Activated CD4-positive, alpha-beta T cell treated with anti-CD3 and anti-CD28 coated beads for 36 hours (primary cell): ENCODE measurements at regions of chr9 and their contacts with region 1.

Region 1: GRCh38 chr9:13056720-13057119 is 222.8 kb downstream of the MPDZ start:
- DNase-seq: no peak
- ATAC-seq: no peak
- H3K4me3 Mint-ChIP-seq: no peak overlapping the region
- H3K27ac Mint-ChIP-seq: no peak overlapping the region
- H3K4me1 Mint-ChIP-seq: no peaks in the 10 kb centered on the region
- H3K27me3 Mint-ChIP-seq: no peaks in the 10 kb centered on the region

Region 2: GRCh38 chr9:13033959-13034693 is 22.6 kb before region 1 on chr9:
- CTCF ChIA-PET with region 1: interaction called, 11 read pairs
- POLR2A ChIA-PET with region 1: no interaction called
- intact Hi-C with region 1: no loop called
- DNase-seq: peak; percentile 39
- ATAC-seq: no peak
- H3K4me3 Mint-ChIP-seq: no peak overlapping the region
- H3K27ac Mint-ChIP-seq: no peak overlapping the region
- H3K4me1 Mint-ChIP-seq: no peaks in the 10 kb centered on the region
- H3K27me3 Mint-ChIP-seq: no peaks in the 10 kb centered on the region

Region 3: GRCh38 chr9:13110766-13111417 is 54.2 kb after region 1 on chr9:
- CTCF ChIA-PET with region 1: no interaction called
- POLR2A ChIA-PET with region 1: no interaction called
- intact Hi-C with region 1: loop called in 1 of 2 experiments (anchors 10 kb)
- DNase-seq: no peak
- ATAC-seq: no peak
- H3K4me3 Mint-ChIP-seq: no peak overlapping the region
- H3K27ac Mint-ChIP-seq: no peak overlapping the region
- H3K4me1 Mint-ChIP-seq: no peaks in the 10 kb centered on the region
- H3K27me3 Mint-ChIP-seq: no peaks in the 10 kb centered on the region